ENCODE measurements at regions of chr1 and their contacts with region 1.

Region 1: GRCh38 chr1:20151906-20152598 is 12.9 kb downstream of the PLA2G2F start:
- DNase-seq: peak; percentile 47 to 79 (median 71)
- ATAC-seq: peak; percentile 93
- H3K4me3 ChIP-seq: peak overlapping the region; percentile 71
- H3K4me3 Mint-ChIP-seq: peak overlapping the region; percentile 74 to 90 (median 82)
- H3K27ac ChIP-seq: no peak overlapping the region
- H3K27ac Mint-ChIP-seq: peak overlapping the region in 3 of 9 donors; percentile 25 to 61 (median 60)
- H3K4me1 ChIP-seq: peaks cover 5 to 11% of the 10 kb centered on the region in 2 donors
- H3K4me1 Mint-ChIP-seq: peaks cover 6 to 20% (median 12%) of the 10 kb centered on the region in 7 donors
- H3K27me3 ChIP-seq: no peaks in the 10 kb centered on the region
- H3K27me3 Mint-ChIP-seq: no peaks in the 10 kb centered on the region

Region 2: GRCh38 chr1:19661721-19662228 is 490.3 kb before region 1 on chr1:
- CTCF ChIA-PET with region 1: interaction called, 3 read pairs
- POLR2A ChIA-PET with region 1: no interaction called
- intact Hi-C with region 1: loop called in 1 of 2 experiments (anchors 2 kb)
- DNase-seq: peak in 6 of 9 donors; percentile 35 to 66 (median 52)
- ATAC-seq: peak; percentile 63
- H3K4me3 ChIP-seq: no peak overlapping the region
- H3K4me3 Mint-ChIP-seq: peak overlapping the region in 2 of 10 donors; percentile 26 to 47
- H3K27ac ChIP-seq: no peak overlapping the region
- H3K27ac Mint-ChIP-seq: no peak overlapping the region
- H3K4me1 ChIP-seq: peaks cover 7 to 15% of the 10 kb centered on the region in 2 donors
- H3K4me1 Mint-ChIP-seq: peaks cover 12 to 37% (median 26%) of the 10 kb centered on the region in 7 donors
- H3K27me3 ChIP-seq: no peaks in the 10 kb centered on the region
- H3K27me3 Mint-ChIP-seq: peaks cover 0 to 34% (median 28%) of the 10 kb centered on the region in 5 donors

Region 3: GRCh38 chr1:19918057-19918456 is 234.0 kb before region 1 on chr1:
- CTCF ChIA-PET with region 1: interaction called, 65 read pairs
- POLR2A ChIA-PET with region 1: no interaction called
- intact Hi-C with region 1: loop called (anchors 1 kb)
- DNase-seq: peak; percentile 49 to 81 (median 73)
- ATAC-seq: peak; percentile 75
- H3K4me3 ChIP-seq: no peak overlapping the region
- H3K4me3 Mint-ChIP-seq: peak overlapping the region in 1 of 10 donors; percentile 42
- H3K27ac ChIP-seq: no peak overlapping the region
- H3K27ac Mint-ChIP-seq: no peak overlapping the region
- H3K4me1 ChIP-seq: no peaks in the 10 kb centered on the region
- H3K4me1 Mint-ChIP-seq: peaks cover 0 to 5% (median 0%) of the 10 kb centered on the region in 7 donors
- H3K27me3 ChIP-seq: no peaks in the 10 kb centered on the region
- H3K27me3 Mint-ChIP-seq: peaks cover 0 to 6% (median 0%) of the 10 kb centered on the region in 5 donors

Region 4: DNA sequence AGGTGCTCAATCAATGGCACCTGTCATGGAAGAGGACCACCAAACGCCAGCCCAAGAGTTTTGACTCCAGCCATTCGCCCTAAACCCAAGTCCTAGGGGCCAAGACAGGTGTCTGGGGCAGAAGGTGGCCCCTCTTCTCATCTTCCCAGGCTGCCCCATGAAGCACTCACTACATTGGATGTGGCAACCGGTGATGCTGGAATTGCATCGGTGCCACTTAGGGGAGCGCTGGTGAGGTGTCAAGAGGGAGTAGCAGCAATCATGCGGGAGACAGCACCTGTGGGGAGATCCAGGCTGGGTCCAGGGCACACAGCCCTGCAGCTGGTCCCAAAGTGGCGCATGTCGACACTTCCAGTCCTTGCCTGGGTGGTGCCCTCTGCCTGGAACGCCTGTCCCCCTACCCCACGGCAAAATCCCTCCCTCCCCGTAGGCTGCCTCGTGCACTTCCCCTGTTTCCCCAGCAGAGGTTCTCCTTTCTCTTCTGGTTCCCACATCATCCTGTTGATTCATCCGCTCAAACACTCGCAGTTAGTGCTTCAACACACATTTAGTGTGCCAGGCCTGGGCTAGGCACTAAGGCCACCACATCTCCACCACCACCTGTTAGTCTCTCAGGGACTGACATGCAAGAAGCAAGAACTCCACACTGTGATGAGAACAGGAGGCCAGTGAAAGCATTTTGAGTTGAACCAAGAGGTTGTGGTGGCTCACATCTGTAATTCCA is 51.3 kb before region 1 on chr1:
- CTCF ChIA-PET with region 1: no interaction called
- POLR2A ChIA-PET with region 1: no interaction called
- intact Hi-C with region 1: loop called (anchors 1 kb)
- DNase-seq: peak in 5 of 9 donors; percentile 5 to 34 (median 18)
- ATAC-seq: peak; percentile 60
- H3K4me3 ChIP-seq: no peak overlapping the region
- H3K4me3 Mint-ChIP-seq: no peak overlapping the region
- H3K27ac ChIP-seq: no peak overlapping the region
- H3K27ac Mint-ChIP-seq: no peak overlapping the region
- H3K4me1 ChIP-seq: no peaks in the 10 kb centered on the region
- H3K4me1 Mint-ChIP-seq: peaks cover 0 to 6% (median 0%) of the 10 kb centered on the region in 7 donors
- H3K27me3 ChIP-seq: peaks cover 0 to 3% of the 10 kb centered on the region in 2 donors
- H3K27me3 Mint-ChIP-seq: peaks cover 0 to 5% (median 0%) of the 10 kb centered on the region in 5 donors

Region 5: DNA sequence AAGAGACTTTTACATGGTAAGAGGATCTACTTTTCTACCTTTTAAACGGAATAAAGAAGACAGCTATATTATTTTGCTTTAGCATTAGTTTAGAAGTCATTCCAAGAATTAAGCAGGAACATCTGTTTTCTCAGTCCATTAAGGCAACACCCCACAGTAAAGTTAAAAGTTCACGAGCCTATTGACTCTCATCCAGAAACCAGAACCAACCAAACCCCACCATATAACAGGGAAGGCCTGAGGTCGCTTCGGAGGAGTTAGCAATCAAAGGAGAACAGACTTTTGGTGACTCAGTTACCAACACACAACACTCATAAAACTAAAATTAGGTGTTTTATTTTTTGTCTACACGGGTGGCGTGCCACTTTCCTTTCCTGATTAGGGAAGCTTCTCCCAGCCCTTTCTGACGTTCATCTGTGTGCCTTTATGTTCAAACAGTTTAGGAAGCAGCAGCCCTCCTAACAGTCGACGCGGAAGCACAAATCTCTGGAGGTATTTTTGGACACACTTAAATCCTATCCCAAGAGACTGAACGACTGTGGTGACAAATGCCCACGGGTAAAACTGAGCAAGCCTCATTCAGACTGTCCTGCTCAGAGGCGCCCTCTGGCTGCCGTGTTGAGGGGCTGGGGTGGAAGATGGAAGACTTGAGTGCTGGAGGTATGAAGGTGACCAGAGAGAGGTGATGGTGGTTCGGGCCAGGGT is 42.9 kb after region 1 on chr1:
- CTCF ChIA-PET with region 1: interaction called, 5 read pairs
- POLR2A ChIA-PET with region 1: no interaction called
- intact Hi-C with region 1: loop called (anchors 1 kb)
- DNase-seq: peak; percentile 43 to 76 (median 63)
- ATAC-seq: peak; percentile 81
- H3K4me3 ChIP-seq: no peak overlapping the region
- H3K4me3 Mint-ChIP-seq: no peak overlapping the region
- H3K27ac ChIP-seq: no peak overlapping the region
- H3K27ac Mint-ChIP-seq: no peak overlapping the region
- H3K4me1 ChIP-seq: no peaks in the 10 kb centered on the region
- H3K4me1 Mint-ChIP-seq: peaks cover 0 to 7% (median 0%) of the 10 kb centered on the region in 7 donors
- H3K27me3 ChIP-seq: no peaks in the 10 kb centered on the region
- H3K27me3 Mint-ChIP-seq: peaks cover 0 to 36% (median 5%) of the 10 kb centered on the region in 5 donors

Measured in naive thymus-derived CD4-positive, alpha-beta T cell (primary cell).